Motor neuron (in vitro differentiated cells): ENCODE measurements at regions of chr2 and their contacts with region 1.

Region 1: DNA sequence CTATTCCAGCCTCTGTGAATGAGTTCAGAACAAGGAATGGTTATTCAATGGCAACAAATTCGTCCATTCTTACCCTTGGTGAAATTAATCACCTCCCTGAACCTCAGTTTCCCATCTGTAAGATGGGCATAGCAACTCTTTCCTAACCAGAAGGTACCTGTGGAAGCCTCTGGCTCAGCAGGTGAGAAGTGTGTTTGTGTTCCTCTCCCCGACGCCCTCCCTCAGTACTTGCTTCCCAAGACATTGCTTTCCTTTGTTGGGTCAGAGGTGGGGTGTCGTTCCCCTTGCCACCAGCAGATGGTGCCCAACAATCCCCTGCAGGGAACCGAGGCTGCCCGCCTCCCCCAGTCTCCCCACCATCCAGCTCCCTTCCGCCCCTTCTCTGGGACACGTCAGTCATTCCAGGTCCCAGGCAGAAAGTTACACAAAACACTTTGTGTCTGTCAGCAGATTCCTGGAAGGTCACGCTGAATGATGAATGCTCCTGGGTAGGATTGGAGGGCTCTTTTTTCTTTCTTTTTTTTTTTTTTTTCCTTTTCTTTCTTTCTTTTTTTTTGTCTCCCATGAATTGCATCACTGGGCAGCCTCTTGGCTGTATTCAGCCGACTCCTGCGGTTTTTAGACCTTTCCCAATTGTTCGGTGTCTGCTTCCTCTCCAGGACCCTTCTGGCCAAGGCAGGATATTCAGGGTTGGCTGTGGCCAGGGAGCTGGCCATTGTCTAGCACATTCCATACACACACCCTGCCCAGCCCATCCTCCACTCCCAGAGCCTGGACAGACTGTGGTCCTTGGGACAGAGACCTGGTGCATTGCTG is 117.3 kb downstream of the LPIN1 start:
- ATAC-seq: peak; percentile 92 to 97 (median 95)
- H3K4me3 ChIP-seq: no peak overlapping the region
- H3K27ac ChIP-seq: peak overlapping the region; percentile 14 to 26
- H3K4me1 ChIP-seq: peaks cover 9 to 11% of the 10 kb centered on the region in 2 donors

Region 2: DNA sequence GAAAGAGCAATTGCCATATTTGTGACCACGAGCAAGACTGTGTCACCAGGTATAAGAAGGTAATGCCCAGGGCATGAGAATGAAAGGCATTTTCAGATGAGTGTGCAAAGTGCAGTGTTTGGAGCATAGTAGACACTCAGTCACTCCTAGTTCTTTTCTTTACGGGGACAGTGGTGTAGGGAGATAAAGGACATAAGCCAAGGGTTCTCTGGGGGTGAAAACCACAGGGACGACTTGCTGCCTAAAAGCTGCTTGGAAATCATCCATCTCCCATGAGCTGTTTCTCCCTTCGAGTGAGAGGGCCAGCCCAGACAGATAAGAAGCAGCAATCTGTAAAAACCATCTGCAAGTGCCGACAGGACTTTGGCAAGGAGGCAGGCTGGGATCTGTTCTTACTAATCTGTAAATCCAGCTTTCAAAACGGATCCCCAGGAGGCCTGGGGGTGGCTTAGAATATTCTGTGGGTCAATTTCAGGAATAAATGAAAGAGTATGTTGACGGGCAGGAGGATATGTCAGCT is 104.3 kb after region 1 on chr2:
- in situ Hi-C with region 1: loop called in 1 of 9 experiments (anchors 25 kb)
- ATAC-seq: peak in 4 of 8 experiments; percentile 22 to 93 (median 80)
- H3K4me3 ChIP-seq: no peak overlapping the region
- H3K27ac ChIP-seq: no peak overlapping the region
- H3K4me1 ChIP-seq: no peaks in the 10 kb centered on the region

Region 3: DNA sequence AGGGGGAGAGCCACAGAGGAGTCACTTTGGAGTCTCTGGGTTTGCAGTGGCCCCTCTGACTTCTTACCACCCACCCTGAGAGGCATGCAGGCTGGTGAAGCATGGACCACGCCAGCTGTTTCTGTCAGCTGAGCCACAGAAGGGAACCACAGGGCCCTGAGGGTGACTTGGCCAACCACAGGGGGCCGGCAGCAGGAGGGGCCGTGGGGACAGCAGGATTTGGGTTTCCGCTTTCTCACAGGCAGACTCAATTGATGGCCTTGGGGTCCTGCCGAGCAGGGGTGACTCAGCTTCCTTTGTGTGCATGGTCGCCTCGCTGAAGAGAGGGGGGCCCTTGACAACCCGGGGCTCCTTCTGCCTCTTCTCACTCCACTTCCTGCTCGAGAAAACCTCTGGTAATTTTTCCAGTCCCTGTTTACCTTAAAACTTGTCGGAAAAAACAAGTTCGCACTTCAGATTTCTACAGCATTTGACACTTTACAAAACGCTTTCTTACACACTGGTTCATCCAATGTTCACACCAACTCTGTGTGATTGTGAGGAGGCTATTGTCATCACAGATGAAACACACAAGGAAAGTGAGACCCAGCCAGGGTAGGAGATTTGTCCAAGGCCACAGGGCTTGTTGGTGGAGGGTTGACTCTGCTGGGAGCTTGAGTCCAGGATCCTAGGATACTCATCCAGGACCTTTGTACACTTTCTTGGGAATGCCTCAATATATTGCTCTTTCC is 193.9 kb after region 1 on chr2:
- in situ Hi-C with region 1: loop called in 1 of 9 experiments (anchors 25 kb)
- ATAC-seq: no peak
- H3K4me3 ChIP-seq: no peak overlapping the region
- H3K27ac ChIP-seq: no peak overlapping the region
- H3K4me1 ChIP-seq: peaks cover 7 to 21% of the 10 kb centered on the region in 2 donors